CD4-positive, alpha-beta T cell (primary cell): ENCODE measurements at regions of chrX and their contacts with region 1.

Region 1: GRCh38 chrX:135050603-135051002 is 1.3 kb downstream of the RTL8A start:
- DNase-seq: no peak
- ATAC-seq: no peak
- H3K4me3 ChIP-seq: no peak overlapping the region
- H3K4me3 Mint-ChIP-seq: peak overlapping the region; percentile 85
- H3K27ac ChIP-seq: no peak overlapping the region
- H3K27ac Mint-ChIP-seq: peak overlapping the region; percentile 93
- H3K4me1 ChIP-seq: peaks cover 13% of the 10 kb centered on the region
- H3K4me1 Mint-ChIP-seq: peaks cover 29% of the 10 kb centered on the region
- H3K27me3 ChIP-seq: no peaks in the 10 kb centered on the region
- H3K27me3 Mint-ChIP-seq: no peaks in the 10 kb centered on the region
- CTCF ChIP-seq: no peak

Region 2: DNA sequence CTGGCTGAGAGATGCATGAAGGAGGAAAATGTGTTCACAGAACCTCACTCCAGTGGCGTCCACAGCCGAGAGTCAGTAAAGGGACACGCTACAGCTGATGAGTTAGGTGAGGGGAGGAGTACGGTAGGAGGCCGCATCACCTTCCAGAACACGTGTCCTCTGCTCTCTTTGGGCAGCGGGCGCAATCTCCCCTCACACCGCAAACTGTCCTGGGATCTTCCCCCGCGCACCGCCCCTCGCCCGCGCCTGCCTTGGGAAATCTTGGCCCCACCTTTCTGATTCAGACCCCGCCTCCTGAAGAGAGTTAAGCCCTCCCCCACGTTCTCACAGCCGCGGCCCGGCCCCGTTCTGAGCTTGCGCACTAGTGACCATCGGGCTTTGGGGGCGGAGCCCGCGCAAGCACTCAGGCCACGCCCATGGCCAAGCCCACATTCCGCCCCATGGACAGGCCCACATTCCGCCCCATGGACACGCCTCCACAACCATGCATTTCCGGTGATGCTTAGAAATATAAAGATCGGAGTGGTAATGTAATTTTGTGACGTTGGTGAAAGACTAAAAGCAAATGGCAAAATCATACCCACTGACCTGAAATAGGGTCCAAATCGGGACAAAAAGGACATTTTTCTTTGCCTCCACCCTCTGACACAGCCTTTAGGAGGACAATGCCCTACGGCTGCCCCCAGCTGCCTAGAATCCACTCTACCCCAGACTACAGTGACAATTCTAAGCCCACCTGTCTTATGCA is 46.6 kb before region 1 on chrX:
- CTCF ChIA-PET with region 1: no interaction called
- POLR2A ChIA-PET with region 1: interaction called, 6 read pairs
- intact Hi-C with region 1: loop called (anchors 1 to 2 kb)
- DNase-seq: peak; percentile 76 to 93 (median 84)
- ATAC-seq: peak; percentile 96
- H3K4me3 ChIP-seq: peak overlapping the region; percentile 59
- H3K4me3 Mint-ChIP-seq: peak overlapping the region; percentile 83
- H3K27ac ChIP-seq: peak overlapping the region in 1 of 2 donors; percentile 60
- H3K27ac Mint-ChIP-seq: peak overlapping the region; percentile 75
- H3K4me1 ChIP-seq: peaks cover 10% of the 10 kb centered on the region
- H3K4me1 Mint-ChIP-seq: peaks cover 19% of the 10 kb centered on the region
- H3K27me3 ChIP-seq: no peaks in the 10 kb centered on the region
- H3K27me3 Mint-ChIP-seq: no peaks in the 10 kb centered on the region
- CTCF ChIP-seq: no peak

Region 3: DNA sequence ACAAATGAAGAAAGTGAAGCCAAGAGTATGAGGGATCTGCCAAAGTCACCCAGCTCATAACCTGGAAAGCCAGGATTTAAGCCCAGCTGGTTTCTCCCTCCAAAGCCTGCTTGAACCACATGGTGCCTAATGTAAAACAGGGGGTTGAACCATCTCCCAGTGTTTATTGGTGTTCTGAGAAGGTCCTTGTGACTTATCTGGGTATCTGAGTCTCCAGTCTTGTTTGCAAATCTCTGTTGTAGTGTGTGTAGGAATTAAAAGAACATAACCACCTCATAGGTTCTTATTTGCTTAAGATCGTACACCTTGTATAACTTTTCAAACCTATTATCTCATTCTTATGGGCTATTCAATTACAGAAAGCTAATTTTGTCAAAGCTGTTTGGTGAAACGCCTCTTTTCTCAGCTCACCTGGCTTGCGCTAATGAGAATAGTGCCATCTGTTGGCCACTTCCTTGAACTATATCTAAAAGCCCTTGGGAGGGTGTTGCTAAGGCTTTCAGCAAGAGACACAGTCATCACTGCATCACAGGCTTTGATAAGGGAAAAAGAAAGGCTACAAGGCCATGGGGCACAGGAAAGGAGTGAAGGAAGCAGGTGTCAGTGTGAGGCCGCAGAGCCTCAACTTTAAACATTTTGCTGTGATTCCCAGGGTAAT is 35.7 kb after region 1 on chrX:
- CTCF ChIA-PET with region 1: no interaction called
- POLR2A ChIA-PET with region 1: no interaction called
- intact Hi-C with region 1: loop called in 1 of 2 experiments (anchors 5 kb)
- DNase-seq: peak in 9 of 14 experiments; percentile 9 to 80 (median 27)
- ATAC-seq: peak; percentile 98
- H3K4me3 ChIP-seq: no peak overlapping the region
- H3K4me3 Mint-ChIP-seq: no peak overlapping the region
- H3K27ac ChIP-seq: no peak overlapping the region
- H3K27ac Mint-ChIP-seq: no peak overlapping the region
- H3K4me1 ChIP-seq: peaks cover 2% of the 10 kb centered on the region
- H3K4me1 Mint-ChIP-seq: peaks cover 6% of the 10 kb centered on the region
- H3K27me3 ChIP-seq: no peaks in the 10 kb centered on the region
- H3K27me3 Mint-ChIP-seq: peaks cover 4% of the 10 kb centered on the region
- CTCF ChIP-seq: peak; percentile 57